B cell (primary cell): ENCODE measurements at regions of chr4 and their contacts with region 1.

Region 1: GRCh38 chr4:54217642-54218495 is 11.2 kb upstream of the PDGFRA start:
- DNase-seq: peak; percentile 75
- ATAC-seq: peak; percentile 67
- H3K4me3 ChIP-seq: peak overlapping the region in 1 of 5 experiments; percentile 38
- H3K4me3 Mint-ChIP-seq: peak overlapping the region; percentile 24
- H3K27ac ChIP-seq: no peak overlapping the region
- H3K27ac Mint-ChIP-seq: no peak overlapping the region
- H3K4me1 ChIP-seq: peaks cover 7 to 8% of the 10 kb centered on the region in 2 donors
- H3K4me1 Mint-ChIP-seq: peaks cover 6% of the 10 kb centered on the region
- H3K27me3 ChIP-seq: peaks cover 0 to 18% (median 15%) of the 10 kb centered on the region in 4 experiments
- H3K27me3 Mint-ChIP-seq: peaks cover 37% of the 10 kb centered on the region
- CTCF ChIP-seq: peak; percentile 93

Region 2: GRCh38 chr4:52376132-52376704 is 1841.7 kb before region 1 on chr4:
- CTCF ChIA-PET with region 1: interaction called, 3 read pairs
- POLR2A ChIA-PET with region 1: no interaction called
- intact Hi-C with region 1: loop called (anchors 5 kb)
- DNase-seq: peak; percentile 49
- ATAC-seq: no peak
- H3K4me3 ChIP-seq: no peak overlapping the region
- H3K4me3 Mint-ChIP-seq: no peak overlapping the region
- H3K27ac ChIP-seq: no peak overlapping the region
- H3K27ac Mint-ChIP-seq: no peak overlapping the region
- H3K4me1 ChIP-seq: no peaks in the 10 kb centered on the region
- H3K4me1 Mint-ChIP-seq: no peaks in the 10 kb centered on the region
- H3K27me3 ChIP-seq: peaks cover 0 to 3% (median 0%) of the 10 kb centered on the region in 4 experiments
- H3K27me3 Mint-ChIP-seq: peaks cover 26% of the 10 kb centered on the region
- CTCF ChIP-seq: peak; percentile 80

Region 3: DNA sequence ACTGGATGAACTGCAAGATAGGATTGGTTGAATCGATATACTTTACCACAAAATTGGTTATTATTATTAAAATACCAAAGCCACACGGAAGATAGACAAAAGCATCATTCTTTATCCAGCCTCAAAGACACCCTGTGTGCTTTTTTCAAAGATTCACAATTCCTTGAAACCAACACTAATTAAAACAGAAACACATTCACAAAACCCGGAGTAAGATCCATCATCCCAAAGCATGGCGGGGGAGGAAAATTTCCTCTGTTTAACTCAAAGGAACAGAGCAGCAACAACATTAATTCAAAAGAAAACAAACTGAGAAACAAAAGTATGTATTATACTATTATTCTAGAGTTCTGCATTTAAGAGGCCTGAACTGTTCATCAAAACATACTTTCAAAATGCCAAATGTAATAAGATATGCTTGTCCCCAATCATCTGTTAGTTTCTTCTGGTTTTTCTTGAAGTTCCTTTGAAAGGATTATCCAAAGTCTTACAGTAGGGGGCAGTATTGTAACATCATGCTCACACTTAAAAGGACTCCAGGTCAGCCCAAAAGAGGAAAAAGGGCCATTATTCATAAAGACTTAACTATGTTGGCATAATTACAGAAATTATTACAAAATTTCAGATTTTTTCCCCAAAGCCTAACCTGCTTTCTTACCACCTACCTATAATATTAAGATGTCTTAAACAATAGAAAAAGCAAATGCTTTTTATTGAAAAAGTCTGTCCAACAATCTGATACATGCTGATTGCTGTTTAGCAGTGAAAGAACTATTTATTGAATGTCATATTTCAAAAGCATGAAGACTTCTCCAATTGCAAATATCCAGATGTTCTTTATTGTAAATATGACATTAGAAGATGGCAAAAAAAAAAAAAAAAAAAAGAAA is 1020.7 kb before region 1 on chr4:
- CTCF ChIA-PET with region 1: interaction called, 10 read pairs
- POLR2A ChIA-PET with region 1: no interaction called
- intact Hi-C with region 1: loop called (anchors 1 kb)
- DNase-seq: peak; percentile 72
- ATAC-seq: no peak
- H3K4me3 ChIP-seq: no peak overlapping the region
- H3K4me3 Mint-ChIP-seq: no peak overlapping the region
- H3K27ac ChIP-seq: no peak overlapping the region
- H3K27ac Mint-ChIP-seq: no peak overlapping the region
- H3K4me1 ChIP-seq: peaks cover 0 to under 1% of the 10 kb centered on the region in 2 donors
- H3K4me1 Mint-ChIP-seq: peaks cover under 1% of the 10 kb centered on the region
- H3K27me3 ChIP-seq: no peaks in the 10 kb centered on the region
- H3K27me3 Mint-ChIP-seq: no peaks in the 10 kb centered on the region
- CTCF ChIP-seq: peak; percentile 88

Region 4: DNA sequence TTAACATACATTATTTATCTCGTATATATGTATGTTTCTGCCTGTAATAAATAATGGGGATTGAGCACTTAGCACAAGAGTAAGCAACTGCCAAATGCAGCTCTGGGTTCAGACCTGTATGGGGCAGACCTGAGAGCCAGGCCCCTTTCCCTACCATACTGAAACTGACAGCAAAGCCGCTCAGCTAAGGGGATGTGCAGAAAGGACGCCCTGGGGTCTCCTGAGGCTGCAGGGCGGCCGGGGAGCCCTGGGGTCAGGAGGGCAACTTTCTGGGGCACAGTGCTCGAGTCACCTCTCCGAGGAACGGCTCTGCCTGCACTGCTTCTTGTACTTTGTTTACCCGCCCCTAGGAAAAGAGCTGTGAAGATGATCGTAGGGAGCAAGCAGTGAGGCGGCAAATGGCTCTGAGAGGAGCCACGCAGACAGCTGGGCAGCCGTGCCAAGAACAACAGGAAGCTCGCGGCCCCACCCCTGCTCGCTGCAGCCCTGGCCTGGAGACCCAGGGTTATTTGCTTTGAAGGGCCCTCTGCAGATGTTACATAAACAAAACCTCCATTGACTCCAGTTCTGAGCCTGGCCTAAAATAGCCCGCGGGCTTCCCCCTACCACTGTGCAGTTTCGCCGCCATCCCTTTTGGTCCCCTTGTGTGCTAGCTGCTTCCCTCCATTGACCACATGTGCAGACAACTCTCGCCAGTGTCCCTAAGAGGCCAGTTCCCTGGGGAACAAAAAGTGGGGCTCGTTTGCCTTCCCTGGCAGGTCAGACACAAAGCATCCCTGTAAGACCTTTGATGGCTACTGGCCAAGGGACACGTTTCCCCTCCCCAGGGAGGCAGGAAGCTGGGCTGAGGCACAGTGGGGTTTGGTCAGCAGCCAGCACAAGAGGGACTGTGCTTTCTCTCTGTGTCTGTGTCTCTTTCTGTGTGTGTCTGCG is 515.3 kb before region 1 on chr4:
- CTCF ChIA-PET with region 1: interaction called, 9 read pairs
- POLR2A ChIA-PET with region 1: no interaction called
- intact Hi-C with region 1: loop called (anchors 2 kb)
- DNase-seq: peak; percentile 54
- ATAC-seq: peak; percentile 81
- H3K4me3 ChIP-seq: peak overlapping the region in 4 of 5 experiments; percentile 7 to 50 (median 41)
- H3K4me3 Mint-ChIP-seq: peak overlapping the region; percentile 71
- H3K27ac ChIP-seq: peak overlapping the region; percentile 42 to 58
- H3K27ac Mint-ChIP-seq: peak overlapping the region; percentile 93
- H3K4me1 ChIP-seq: peaks cover 43 to 48% of the 10 kb centered on the region in 2 donors
- H3K4me1 Mint-ChIP-seq: peaks cover 57% of the 10 kb centered on the region
- H3K27me3 ChIP-seq: no peaks in the 10 kb centered on the region
- H3K27me3 Mint-ChIP-seq: no peaks in the 10 kb centered on the region
- CTCF ChIP-seq: no peak

Region 5: GRCh38 chr4:53908661-53909078 is 309.2 kb before region 1 on chr4:
- CTCF ChIA-PET with region 1: interaction called, 50 read pairs
- POLR2A ChIA-PET with region 1: no interaction called
- intact Hi-C with region 1: loop called (anchors 1 kb)
- DNase-seq: peak; percentile 53
- ATAC-seq: no peak
- H3K4me3 ChIP-seq: peak overlapping the region in 1 of 5 experiments; percentile 27
- H3K4me3 Mint-ChIP-seq: peak overlapping the region; percentile 10
- H3K27ac ChIP-seq: no peak overlapping the region
- H3K27ac Mint-ChIP-seq: no peak overlapping the region
- H3K4me1 ChIP-seq: peaks cover 9 to 13% of the 10 kb centered on the region in 2 donors
- H3K4me1 Mint-ChIP-seq: peaks cover 12% of the 10 kb centered on the region
- H3K27me3 ChIP-seq: peaks cover 0 to 24% (median 18%) of the 10 kb centered on the region in 4 experiments
- H3K27me3 Mint-ChIP-seq: peaks cover 56% of the 10 kb centered on the region
- CTCF ChIP-seq: peak; percentile 64

Region 6: GRCh38 chr4:53929955-53930798 is 287.7 kb before region 1 on chr4:
- CTCF ChIA-PET with region 1: interaction called, 93 read pairs
- POLR2A ChIA-PET with region 1: no interaction called
- intact Hi-C with region 1: loop called (anchors 1 kb)
- DNase-seq: peak; percentile 60
- ATAC-seq: no peak
- H3K4me3 ChIP-seq: no peak overlapping the region
- H3K4me3 Mint-ChIP-seq: no peak overlapping the region
- H3K27ac ChIP-seq: no peak overlapping the region
- H3K27ac Mint-ChIP-seq: no peak overlapping the region
- H3K4me1 ChIP-seq: no peaks in the 10 kb centered on the region
- H3K4me1 Mint-ChIP-seq: no peaks in the 10 kb centered on the region
- H3K27me3 ChIP-seq: peaks cover 0 to 9% (median 3%) of the 10 kb centered on the region in 4 experiments
- H3K27me3 Mint-ChIP-seq: peaks cover 22% of the 10 kb centered on the region
- CTCF ChIP-seq: peak; percentile 64